ENCODE measurements at regions of chr22 and their contacts with region 1.

Region 1: DNA sequence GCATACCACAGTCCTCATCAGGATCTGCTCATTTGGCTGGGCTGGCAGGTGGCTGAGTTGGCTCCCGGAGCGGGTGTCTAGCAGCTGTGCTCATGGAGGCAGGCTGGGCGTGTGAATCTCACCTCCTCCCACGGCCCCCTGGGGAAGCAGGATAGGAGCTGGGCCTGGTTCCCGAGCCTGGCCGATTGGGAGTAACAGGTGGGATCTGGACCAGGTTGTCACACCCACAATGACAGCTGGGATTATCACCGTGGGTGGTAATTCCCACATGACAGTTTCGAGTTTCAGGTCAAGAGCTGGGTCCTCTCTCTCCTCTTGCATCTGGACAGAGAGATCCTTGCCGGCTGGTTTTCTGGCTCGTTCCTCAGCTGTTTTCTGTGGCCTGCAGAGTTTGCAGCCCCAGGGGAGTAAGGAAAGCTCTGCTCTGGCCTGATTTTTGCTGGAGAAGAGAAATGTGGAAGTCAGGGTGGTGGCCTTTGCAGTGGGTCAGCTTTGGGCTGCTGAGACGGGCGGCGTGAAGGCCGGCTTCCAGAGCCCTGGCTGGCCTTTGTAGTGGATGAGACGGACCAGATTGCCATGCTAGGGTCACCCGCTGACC is 57.0 kb downstream of the BCR start:
- DNase-seq: peak; percentile 66 to 68
- ATAC-seq: peak; percentile 89 to 96
- H3K4me3 ChIP-seq: no peak overlapping the region
- H3K27ac ChIP-seq: peak overlapping the region in 1 of 4 donors; percentile 23
- H3K4me1 ChIP-seq: peaks cover 28 to 29% of the 10 kb centered on the region in 2 donors
- H3K27me3 ChIP-seq: peaks cover 2 to 24% (median 10%) of the 10 kb centered on the region in 3 donors
- CTCF ChIP-seq: no peak
- POLR2A ChIP-seq: no peak

Region 2: GRCh38 chr22:23212061-23213021 is 25.0 kb before region 1 on chr22:
- in situ Hi-C with region 1: no loop called
- intact Hi-C with region 1: loop called (anchors 2 kb)
- DNase-seq: peak in 1 of 2 donors; percentile 34
- ATAC-seq: peak; percentile 64 to 94
- H3K4me3 ChIP-seq: no peak overlapping the region
- H3K27ac ChIP-seq: peak overlapping the region in 1 of 4 donors; percentile 48
- H3K4me1 ChIP-seq: peaks cover 29 to 39% of the 10 kb centered on the region in 2 donors
- H3K27me3 ChIP-seq: peaks cover 0 to 6% (median 3%) of the 10 kb centered on the region in 3 donors
- CTCF ChIP-seq: no peak
- POLR2A ChIP-seq: no peak